ENCODE measurements at regions of chr1 and their contacts with region 1.

Region 1: GRCh38 chr1:17661546-17662157 is 93.5 kb upstream of the ACTL8 start:
- DNase-seq: peak; percentile 47 to 61
- ATAC-seq: peak in 7 of 8 donors; percentile 18 to 66 (median 39)
- H3K4me3 ChIP-seq: no peak overlapping the region
- H3K27ac ChIP-seq: no peak overlapping the region
- H3K4me1 ChIP-seq: peaks cover 0 to 5% (median 0%) of the 10 kb centered on the region in 9 donors
- H3K27me3 ChIP-seq: no peaks in the 10 kb centered on the region
- CTCF ChIP-seq: peak; percentile 55 to 86 (median 81)

Region 2: DNA sequence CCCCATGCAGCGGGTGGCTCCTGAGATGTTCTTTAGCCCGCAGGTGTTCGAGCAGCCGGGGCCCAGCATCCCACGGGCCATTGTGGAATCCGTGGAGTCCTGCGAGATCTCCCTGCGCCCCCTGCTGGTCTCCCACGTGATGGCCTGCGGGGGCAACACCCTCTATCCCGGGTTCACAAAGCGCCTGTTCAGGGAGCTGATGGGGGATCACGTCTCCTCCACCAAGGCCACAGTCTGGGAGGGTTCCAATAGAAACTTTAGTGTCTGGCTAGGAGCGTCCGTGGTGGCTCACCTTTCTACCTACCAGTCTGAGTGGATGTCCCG is 164.5 kb after region 1 on chr1:
- intact Hi-C with region 1: loop called in 4 of 10 experiments (anchors 5 to 10 kb)
- DNase-seq: peak in 1 of 2 donors; percentile 57
- ATAC-seq: peak in 7 of 8 donors; percentile 19 to 45 (median 30)
- H3K4me3 ChIP-seq: no peak overlapping the region
- H3K27ac ChIP-seq: no peak overlapping the region
- H3K4me1 ChIP-seq: peaks cover 0 to 17% (median 0%) of the 10 kb centered on the region in 9 donors
- H3K27me3 ChIP-seq: peaks cover 0 to 29% (median 7%) of the 10 kb centered on the region in 7 donors
- CTCF ChIP-seq: peak; percentile 35 to 71 (median 62)

Region 3: DNA sequence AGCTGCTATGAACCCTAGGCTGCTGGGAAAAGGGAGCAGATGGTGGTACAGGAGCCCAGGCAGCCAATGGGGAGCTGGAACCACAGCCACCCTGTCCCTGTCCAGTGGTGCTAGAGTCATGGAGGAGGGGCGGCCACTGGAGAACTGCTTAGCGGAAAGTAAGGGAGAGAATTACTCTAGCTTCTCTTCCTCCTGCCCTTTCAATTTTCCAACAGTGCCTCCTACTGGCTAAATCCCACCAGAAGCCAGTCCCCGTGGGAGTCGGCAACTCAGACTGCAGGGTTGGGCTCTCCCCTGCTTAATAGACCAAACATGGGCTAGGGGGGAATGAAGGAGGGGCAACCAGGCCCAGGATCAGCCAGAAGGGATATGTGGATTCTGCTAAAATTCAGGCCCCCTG is 248.0 kb after region 1 on chr1:
- intact Hi-C with region 1: loop called in 3 of 10 experiments (anchors 10 kb)
- DNase-seq: no peak
- ATAC-seq: peak in 7 of 8 donors; percentile 25 to 83 (median 76)
- H3K4me3 ChIP-seq: no peak overlapping the region
- H3K27ac ChIP-seq: no peak overlapping the region
- H3K4me1 ChIP-seq: no peaks in the 10 kb centered on the region
- H3K27me3 ChIP-seq: peaks cover 0 to 31% (median 22%) of the 10 kb centered on the region in 7 donors
- CTCF ChIP-seq: peak in 7 of 9 donors; percentile 13 to 44 (median 34)

Region 4: GRCh38 chr1:18100491-18101063 is 438.9 kb after region 1 on chr1:
- intact Hi-C with region 1: loop called in 4 of 10 experiments (anchors 5 to 10 kb)
- DNase-seq: peak; percentile 32 to 48
- ATAC-seq: peak in 5 of 8 donors; percentile 42 to 73 (median 55)
- H3K4me3 ChIP-seq: no peak overlapping the region
- H3K27ac ChIP-seq: no peak overlapping the region
- H3K4me1 ChIP-seq: no peaks in the 10 kb centered on the region
- H3K27me3 ChIP-seq: peaks cover 0 to 71% (median 36%) of the 10 kb centered on the region in 7 donors
- CTCF ChIP-seq: peak; percentile 47 to 82 (median 73)

Region 5: DNA sequence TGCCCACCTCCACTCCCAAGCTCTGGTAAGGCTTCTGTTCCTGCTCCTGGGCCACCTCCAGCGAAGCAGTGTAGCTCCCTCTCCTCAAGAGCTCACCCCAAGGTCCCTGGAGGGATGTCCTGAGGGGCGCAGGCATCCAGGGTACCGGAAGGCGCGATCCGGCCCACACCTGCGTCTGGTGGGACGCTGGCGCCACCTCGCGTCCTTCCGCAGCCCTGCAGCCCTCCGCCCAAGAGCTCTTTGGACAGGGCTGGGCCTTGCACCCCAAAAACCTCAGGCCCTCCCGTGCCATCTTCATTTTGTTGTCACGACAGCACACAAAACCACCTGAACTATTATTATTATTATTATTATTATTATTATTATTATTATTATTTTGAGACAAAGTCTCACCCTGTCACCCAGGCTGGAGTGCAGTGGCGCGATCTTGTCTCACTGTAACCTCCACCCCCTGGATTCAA is 919.8 kb after region 1 on chr1:
- intact Hi-C with region 1: loop called in 4 of 10 experiments (anchors 5 to 10 kb)
- DNase-seq: peak in 1 of 2 donors; percentile 23
- ATAC-seq: peak in 3 of 8 donors; percentile 34 to 47 (median 45)
- H3K4me3 ChIP-seq: no peak overlapping the region
- H3K27ac ChIP-seq: no peak overlapping the region
- H3K4me1 ChIP-seq: peaks cover 0 to 15% (median 0%) of the 10 kb centered on the region in 9 donors
- H3K27me3 ChIP-seq: peaks cover 0 to 29% (median 19%) of the 10 kb centered on the region in 7 donors
- CTCF ChIP-seq: peak; percentile 27 to 75 (median 66)

Measured in heart right ventricle (tissue), 16 donors.